HepG2 (cell line): ENCODE measurements at regions of chr15 and their contacts with region 1.

Region 1: DNA sequence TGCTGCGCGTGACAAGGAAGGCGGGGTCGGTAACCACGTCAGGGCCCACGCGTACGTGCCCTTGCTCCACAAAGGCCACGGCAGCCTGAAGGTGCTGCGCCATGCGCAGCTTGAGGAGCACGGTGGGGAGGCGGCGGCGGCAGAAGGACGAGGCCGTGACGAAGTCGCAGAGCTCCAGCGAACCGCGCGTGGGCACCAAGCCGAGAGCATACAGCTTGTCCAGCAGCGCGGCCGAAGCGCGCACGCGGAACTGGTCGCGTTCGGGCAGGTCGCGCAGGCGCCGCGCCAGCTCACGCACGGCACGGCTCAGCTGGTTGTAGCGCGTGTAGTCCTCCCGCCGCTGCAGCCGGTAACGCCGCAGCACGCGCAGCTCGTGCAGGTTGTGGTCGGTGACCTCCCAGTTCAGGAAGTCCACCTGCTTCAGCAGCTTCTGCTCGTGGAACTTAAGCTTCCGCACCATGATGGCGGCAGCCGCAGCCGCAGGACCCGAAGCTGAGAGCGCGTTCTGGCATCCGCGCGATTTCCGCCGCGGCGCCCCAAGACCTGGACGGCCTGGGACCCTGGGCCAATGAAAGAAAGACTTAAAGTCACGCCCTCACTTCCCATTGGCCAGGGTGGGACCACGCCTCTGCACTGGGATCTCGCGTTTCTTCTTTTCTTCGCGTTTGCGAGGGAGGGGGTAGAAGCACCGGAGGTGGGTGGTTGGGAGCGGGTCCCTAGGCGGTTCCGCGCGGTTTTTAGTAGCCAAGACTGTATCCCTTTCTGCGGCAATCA is at the start of gene IMP3:
- DNase-seq: peak; percentile 97
- ATAC-seq: peak; percentile 92
- H3K4me3 ChIP-seq: peak within 1 kb of the TSS; percentile 77 to 94 (median 87)
- H3K27ac ChIP-seq: peak within 1 kb of the TSS; percentile 94
- H3K4me1 ChIP-seq: peaks cover 32% of the 10 kb centered on the region
- H3K27me3 ChIP-seq: peaks cover 0 to 2% of the 10 kb centered on the region in 2 experiments; a peak in 1 of 5 replicates
- CTCF ChIP-seq: peak; percentile 27; the same call in 1 of the 2 replicates
- EP300 ChIP-seq: no peak; a peak in 1 of 4 replicates
- POLR2A ChIP-seq: peak in 1 of 2 experiments; percentile 99; a peak in 2 of 4 replicates
- RAD21 ChIP-seq: peak; percentile 58
- total RNA-seq, gene IMP3: 143 and 165 TPM in 2 replicates

Region 2: DNA sequence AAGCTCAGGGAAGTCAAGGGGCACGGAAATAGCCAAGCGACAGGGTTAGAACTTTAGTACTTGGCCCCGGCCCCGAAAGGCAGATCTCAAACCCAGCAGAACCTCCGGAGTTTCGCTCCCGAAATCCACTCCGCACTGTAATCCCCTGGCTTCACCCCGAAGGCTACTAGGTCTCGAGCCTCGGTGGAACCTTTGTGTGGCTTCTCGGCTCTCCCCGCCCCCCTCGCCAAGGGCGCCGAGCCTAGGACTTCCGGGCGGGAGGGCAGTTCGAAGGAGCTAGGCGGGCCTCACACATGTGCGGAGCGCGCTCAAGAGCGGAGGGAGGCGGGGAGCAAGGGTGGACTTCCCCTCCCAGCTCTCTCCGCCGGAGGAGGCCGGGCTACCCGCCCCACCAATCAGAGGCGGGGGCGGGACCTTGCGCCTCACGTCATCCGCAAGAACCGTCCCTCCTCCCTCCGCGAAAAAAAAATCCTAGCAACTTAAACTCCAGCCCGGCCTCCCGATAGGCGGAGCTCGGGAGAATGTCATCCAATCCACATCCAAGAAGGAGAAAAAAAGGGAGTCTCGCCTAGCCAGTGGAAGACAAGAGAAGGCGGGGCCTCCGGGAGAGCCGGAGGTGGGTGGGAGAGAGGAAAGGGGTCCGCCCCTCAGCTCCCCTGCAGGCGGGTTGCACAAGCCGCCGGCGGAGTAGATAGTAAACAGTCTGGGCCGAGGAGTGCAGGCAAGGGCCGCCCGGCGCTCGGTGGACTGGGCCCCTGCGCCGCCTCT is 186.0 kb before region 1 on chr15:
- CTCF ChIA-PET with region 1: no interaction called
- POLR2A ChIA-PET with region 1: interaction called, 45 read pairs
- in situ Hi-C with region 1: no loop called
- intact Hi-C with region 1: no loop called
- DNase-seq: peak; percentile 100
- ATAC-seq: peak; percentile 38
- H3K4me3 ChIP-seq: peak overlapping the region; percentile 91 to 93 (median 93)
- H3K27ac ChIP-seq: peak overlapping the region; percentile 94
- H3K4me1 ChIP-seq: peaks cover 37% of the 10 kb centered on the region
- H3K27me3 ChIP-seq: no peaks in the 10 kb centered on the region; a peak in 1 of 5 replicates
- CTCF ChIP-seq: no peak
- EP300 ChIP-seq: no peak
- POLR2A ChIP-seq: peak in 1 of 2 experiments; percentile 62; a peak in 2 of 4 replicates
- RAD21 ChIP-seq: no peak

Region 3: DNA sequence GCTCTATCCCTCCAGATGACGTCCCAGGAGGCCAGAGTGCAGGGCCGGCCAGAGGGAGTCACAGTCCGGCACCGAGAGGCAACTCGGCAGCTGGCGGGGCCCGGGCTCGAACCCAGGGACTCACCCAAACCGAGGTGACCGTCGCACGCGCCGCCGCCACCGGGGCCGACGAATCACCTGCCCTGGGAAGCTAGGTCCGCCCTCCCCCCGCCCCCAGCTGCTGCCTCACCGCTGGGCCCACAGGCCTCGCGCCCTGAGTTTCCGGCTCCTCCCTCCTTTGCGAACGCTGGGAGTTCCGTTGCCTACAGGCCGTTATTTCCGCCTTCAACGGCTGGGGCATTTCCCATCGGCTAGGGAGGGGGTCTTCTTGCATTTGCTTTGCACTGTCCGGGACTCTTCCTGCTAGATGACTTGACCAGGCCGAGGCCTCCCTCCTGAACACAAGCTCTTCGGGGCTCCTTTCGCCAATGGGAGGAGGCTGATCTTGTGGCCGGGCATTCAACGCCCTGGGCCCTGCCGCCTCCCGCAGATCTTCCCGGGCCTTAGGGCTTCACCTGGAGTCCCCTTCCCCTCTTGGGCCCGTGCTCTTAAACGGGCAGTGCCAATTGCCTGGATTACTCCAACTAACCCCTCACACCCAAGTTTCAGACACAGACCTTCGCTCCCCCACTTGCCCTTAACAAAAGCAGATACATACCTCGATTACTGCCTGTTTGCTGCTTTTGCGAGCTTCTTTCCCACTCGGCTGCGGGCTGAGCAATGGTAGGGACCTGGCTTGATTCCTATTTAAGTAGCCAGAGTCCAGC is 14.2 kb before region 1 on chr15 and contains the start of gene SNUPN:
- CTCF ChIA-PET with region 1: no interaction called
- POLR2A ChIA-PET with region 1: interaction called, 41 read pairs
- in situ Hi-C with region 1: no loop called
- intact Hi-C with region 1: loop called (anchors 2 kb)
- DNase-seq: peak; percentile 91
- ATAC-seq: peak; percentile 91
- H3K4me3 ChIP-seq: peak within 1 kb of the TSS; percentile 89 to 100 (median 100)
- H3K27ac ChIP-seq: peak within 1 kb of the TSS; percentile 99
- H3K4me1 ChIP-seq: peaks cover 20% of the 10 kb centered on the region
- H3K27me3 ChIP-seq: no peaks in the 10 kb centered on the region; a peak in 1 of 5 replicates
- CTCF ChIP-seq: no peak
- EP300 ChIP-seq: peak in 1 of 2 experiments; percentile 52; a peak in 1 of 4 replicates
- POLR2A ChIP-seq: peak; percentile 45 to 76; a peak in 3 of 4 replicates
- RAD21 ChIP-seq: peak; percentile 9; the same call in 1 of the 2 replicates
- total RNA-seq, gene SNUPN: 16.4 and 18.3 TPM in 2 replicates

Region 4: DNA sequence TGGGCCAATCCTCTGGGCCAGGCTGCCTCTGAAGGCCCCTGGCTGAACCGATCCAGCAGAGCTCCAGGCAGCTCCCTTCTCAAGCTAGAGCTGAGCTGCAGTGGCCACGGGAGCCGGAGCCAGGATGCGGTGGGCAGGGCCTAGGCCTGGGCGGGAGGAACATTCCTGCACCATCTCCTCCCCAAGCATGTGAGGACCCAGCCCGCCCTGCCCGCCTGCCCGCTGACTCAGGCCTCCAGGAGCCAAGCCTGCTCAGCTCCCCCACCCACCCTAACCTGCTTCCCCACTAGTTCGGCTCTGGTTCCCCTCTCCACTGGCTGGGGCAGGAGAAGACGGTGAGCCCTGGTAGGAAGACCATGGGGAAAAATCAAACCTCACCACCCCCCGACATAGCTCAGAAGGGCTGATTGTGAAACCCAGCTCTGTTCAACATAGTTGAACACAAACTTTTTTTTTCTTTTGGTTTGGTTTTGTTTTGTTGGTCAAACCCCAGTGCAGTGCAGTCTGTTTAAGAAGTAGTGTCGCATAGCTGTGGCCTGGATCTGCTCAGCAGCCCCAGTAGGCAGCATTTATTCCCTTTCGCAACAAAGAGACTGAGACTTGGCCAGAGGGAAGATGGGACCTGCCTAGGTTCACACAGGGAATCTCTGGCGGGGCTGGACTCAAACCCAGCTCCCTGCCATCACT is 21.3 kb after region 1 on chr15:
- CTCF ChIA-PET with region 1: no interaction called
- POLR2A ChIA-PET with region 1: interaction called, 20 read pairs
- in situ Hi-C with region 1: no loop called
- intact Hi-C with region 1: no loop called
- DNase-seq: peak; percentile 45
- ATAC-seq: peak; percentile 87
- H3K4me3 ChIP-seq: peak overlapping the region in 1 of 3 experiments; percentile 27; a peak in 2 of 6 replicates
- H3K27ac ChIP-seq: no peak overlapping the region
- H3K4me1 ChIP-seq: peaks cover 48% of the 10 kb centered on the region
- H3K27me3 ChIP-seq: no peaks in the 10 kb centered on the region
- CTCF ChIP-seq: no peak
- EP300 ChIP-seq: no peak
- POLR2A ChIP-seq: no peak
- RAD21 ChIP-seq: no peak

Region 5: GRCh38 chr15:75675579-75676404 is 35.9 kb after region 1 on chr15:
- CTCF ChIA-PET with region 1: no interaction called
- POLR2A ChIA-PET with region 1: interaction called, 18 read pairs
- in situ Hi-C with region 1: loop called (anchors 5 kb)
- intact Hi-C with region 1: no loop called
- DNase-seq: no peak
- ATAC-seq: peak; percentile 36
- H3K4me3 ChIP-seq: peak overlapping the region in 1 of 3 experiments; percentile 46; a peak in 1 of 6 replicates
- H3K27ac ChIP-seq: no peak overlapping the region
- H3K4me1 ChIP-seq: peaks cover 66% of the 10 kb centered on the region
- H3K27me3 ChIP-seq: peaks cover 4 to 44% of the 10 kb centered on the region in 2 experiments; a peak in 3 of 5 replicates
- CTCF ChIP-seq: peak; percentile 36; the same call in 1 of the 2 replicates
- EP300 ChIP-seq: no peak
- POLR2A ChIP-seq: no peak
- RAD21 ChIP-seq: no peak

Region 6: GRCh38 chr15:75684642-75685041 is 44.7 kb after region 1 on chr15:
- CTCF ChIA-PET with region 1: interaction called, 11 read pairs
- POLR2A ChIA-PET with region 1: interaction called, 18 read pairs
- in situ Hi-C with region 1: loop called (anchors 5 kb)
- intact Hi-C with region 1: loop called (anchors 1 kb)
- DNase-seq: peak; percentile 56
- ATAC-seq: peak; percentile 44
- H3K4me3 ChIP-seq: peak overlapping the region in 1 of 3 experiments; percentile 33; a peak in 1 of 6 replicates
- H3K27ac ChIP-seq: no peak overlapping the region
- H3K4me1 ChIP-seq: peaks cover 41% of the 10 kb centered on the region
- H3K27me3 ChIP-seq: peaks cover 6 to 25% of the 10 kb centered on the region in 2 experiments
- CTCF ChIP-seq: peak; percentile 69
- EP300 ChIP-seq: no peak
- POLR2A ChIP-seq: no peak
- RAD21 ChIP-seq: peak; percentile 44; the same call in 1 of the 2 replicates

Region 7: DNA sequence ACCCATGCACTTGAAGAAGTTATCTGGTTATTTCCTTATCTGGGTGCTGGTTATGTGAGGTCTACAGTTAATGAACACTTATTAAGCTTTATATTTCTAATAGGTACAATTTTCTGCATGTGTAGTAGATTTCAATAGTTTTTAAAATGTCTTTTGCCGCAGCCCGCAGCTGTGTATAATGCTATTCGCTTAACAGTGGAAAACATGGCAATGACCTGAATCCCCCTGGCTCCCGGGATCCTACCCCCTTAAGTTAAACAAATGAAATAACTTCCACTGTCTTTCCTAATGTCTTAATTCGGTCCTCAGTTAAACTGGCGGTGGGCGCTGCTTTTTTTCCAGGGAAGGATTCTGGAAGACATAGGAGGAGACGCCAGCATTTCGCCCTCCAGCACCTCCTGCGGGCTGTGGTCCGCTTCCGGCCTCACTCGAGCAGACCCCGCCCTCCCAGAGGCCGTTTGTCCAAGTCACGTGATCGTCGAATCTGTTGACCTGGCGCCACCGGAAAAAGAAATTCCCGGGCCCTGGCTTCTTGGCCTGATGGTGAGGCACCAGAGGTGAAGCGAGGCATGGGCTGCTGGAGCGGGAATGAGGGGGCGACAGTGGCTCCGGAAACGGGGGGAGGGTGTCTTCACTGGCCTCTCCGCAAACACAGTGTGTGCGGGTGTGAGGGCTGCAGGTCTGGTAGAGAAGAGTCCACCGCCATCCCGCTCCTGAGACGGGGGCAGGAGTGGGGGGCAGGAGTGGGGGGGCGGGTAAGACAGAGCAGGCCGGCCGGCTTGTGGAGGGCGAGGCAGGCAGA is 118.4 kb after region 1 on chr15:
- CTCF ChIA-PET with region 1: no interaction called
- POLR2A ChIA-PET with region 1: no interaction called
- in situ Hi-C with region 1: no loop called
- intact Hi-C with region 1: no loop called
- DNase-seq: peak; percentile 77
- ATAC-seq: peak; percentile 82
- H3K4me3 ChIP-seq: peak overlapping the region; percentile 42 to 49 (median 47)
- H3K27ac ChIP-seq: peak overlapping the region; percentile 37
- H3K4me1 ChIP-seq: peaks cover 47% of the 10 kb centered on the region
- H3K27me3 ChIP-seq: no peaks in the 10 kb centered on the region
- CTCF ChIP-seq: peak; percentile 51
- EP300 ChIP-seq: no peak
- POLR2A ChIP-seq: peak in 1 of 2 experiments; percentile 69; a peak in 2 of 4 replicates
- RAD21 ChIP-seq: 0 out of 2 replicates have a peak, but pooled peaks have one; percentile 8

Region 8: DNA sequence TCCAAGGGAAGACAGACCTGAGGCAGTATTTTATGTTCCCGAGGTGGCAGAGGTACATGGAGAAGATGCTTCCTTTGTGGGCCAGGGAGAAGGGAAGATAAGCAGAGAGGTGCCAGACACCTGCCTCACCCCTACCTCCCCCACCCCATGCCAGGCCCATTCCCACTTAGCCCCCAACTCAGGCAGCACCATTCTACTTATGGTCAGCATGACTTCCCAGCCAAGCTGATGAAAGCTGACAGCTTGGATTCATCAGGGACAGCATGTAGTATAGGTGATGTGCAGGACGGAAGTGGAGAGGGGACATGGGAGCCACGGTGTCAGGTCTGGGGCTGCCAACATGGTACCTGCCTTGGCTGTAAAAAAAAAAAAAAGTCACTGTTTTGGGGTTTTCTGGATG is 130.2 kb after region 1 on chr15:
- CTCF ChIA-PET with region 1: no interaction called
- POLR2A ChIA-PET with region 1: no interaction called
- in situ Hi-C with region 1: no loop called
- intact Hi-C with region 1: no loop called
- DNase-seq: no peak
- ATAC-seq: no peak
- H3K4me3 ChIP-seq: no peak overlapping the region
- H3K27ac ChIP-seq: no peak overlapping the region
- H3K4me1 ChIP-seq: peaks cover 75% of the 10 kb centered on the region
- H3K27me3 ChIP-seq: no peaks in the 10 kb centered on the region
- CTCF ChIP-seq: no peak
- EP300 ChIP-seq: no peak
- POLR2A ChIP-seq: no peak
- RAD21 ChIP-seq: no peak